Caco-2 (cell line): ENCODE measurements at regions of chr10 and their contacts with region 1.

Region 1: DNA sequence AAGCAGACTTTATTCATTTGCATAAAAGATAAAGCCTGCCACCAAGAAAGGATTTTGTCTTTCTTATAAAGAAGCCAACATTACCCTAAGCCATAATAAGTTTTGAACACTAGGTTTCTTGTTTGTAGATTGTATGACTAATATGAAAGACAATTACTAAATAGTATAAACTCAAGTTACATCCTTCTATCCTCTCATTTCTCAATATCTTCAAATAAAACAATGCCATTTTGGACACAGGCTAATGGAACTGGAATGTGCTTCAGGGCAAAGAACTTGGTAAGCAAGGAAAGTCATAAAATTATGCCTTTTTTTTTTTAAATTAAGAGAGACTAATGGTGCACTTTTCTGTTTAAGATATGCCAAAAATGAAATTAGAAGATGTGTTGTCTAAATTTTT is 137.7 kb downstream of the DKK1 start:
- DNase-seq: no peak
- H3K4me3 ChIP-seq: no peak overlapping the region
- H3K4me3 Mint-ChIP-seq: no peak overlapping the region
- H3K27ac Mint-ChIP-seq: no peak overlapping the region
- H3K4me1 ChIP-seq: peaks cover 48% of the 10 kb centered on the region
- H3K4me1 Mint-ChIP-seq: peaks cover 25% of the 10 kb centered on the region
- H3K27me3 ChIP-seq: no peaks in the 10 kb centered on the region
- H3K27me3 Mint-ChIP-seq: no peaks in the 10 kb centered on the region
- CTCF ChIP-seq: peak in 1 of 2 experiments; percentile 2

Region 2: GRCh38 chr10:52040486-52040885 is 411.3 kb before region 1 on chr10:
- CTCF ChIA-PET with region 1: no interaction called
- POLR2A ChIA-PET with region 1: no interaction called
- intact Hi-C with region 1: loop called (anchors 5 kb)
- DNase-seq: no peak
- H3K4me3 ChIP-seq: no peak overlapping the region
- H3K4me3 Mint-ChIP-seq: no peak overlapping the region
- H3K27ac Mint-ChIP-seq: no peak overlapping the region
- H3K4me1 ChIP-seq: peaks cover 32% of the 10 kb centered on the region
- H3K4me1 Mint-ChIP-seq: peaks cover 32% of the 10 kb centered on the region
- H3K27me3 ChIP-seq: no peaks in the 10 kb centered on the region
- H3K27me3 Mint-ChIP-seq: no peaks in the 10 kb centered on the region
- CTCF ChIP-seq: no peak

Region 3: GRCh38 chr10:52232561-52233350 is 219.1 kb before region 1 on chr10:
- CTCF ChIA-PET with region 1: no interaction called
- POLR2A ChIA-PET with region 1: no interaction called
- intact Hi-C with region 1: no loop called
- DNase-seq: no peak
- H3K4me3 ChIP-seq: peak overlapping the region; percentile 15
- H3K4me3 Mint-ChIP-seq: peak overlapping the region; percentile 75
- H3K27ac Mint-ChIP-seq: peak overlapping the region; percentile 69
- H3K4me1 ChIP-seq: peaks cover 9% of the 10 kb centered on the region; the same call in 1 of the 2 replicates
- H3K4me1 Mint-ChIP-seq: peaks cover 11% of the 10 kb centered on the region
- H3K27me3 ChIP-seq: no peaks in the 10 kb centered on the region
- H3K27me3 Mint-ChIP-seq: no peaks in the 10 kb centered on the region
- CTCF ChIP-seq: no peak

Region 4: DNA sequence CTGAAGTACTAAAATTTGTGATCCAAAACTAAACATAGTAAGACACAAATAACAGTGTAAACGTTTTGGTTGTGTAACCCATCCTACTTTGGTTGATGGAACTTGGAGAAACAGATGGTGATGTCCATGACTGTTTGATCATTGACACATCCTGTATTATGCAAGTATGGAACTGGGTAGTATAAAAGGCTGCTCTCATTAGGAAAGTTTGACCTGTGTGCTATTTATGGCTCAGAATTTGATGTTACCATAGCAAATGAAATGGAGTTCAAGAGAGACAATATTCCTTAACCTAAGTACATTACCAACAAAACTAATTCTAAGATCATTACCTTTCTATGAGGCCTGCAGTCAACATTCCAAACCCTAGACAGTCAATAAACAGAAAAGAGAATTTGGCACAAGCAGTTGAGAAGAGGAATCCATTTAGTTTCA is 97.8 kb before region 1 on chr10:
- CTCF ChIA-PET with region 1: no interaction called
- POLR2A ChIA-PET with region 1: no interaction called
- intact Hi-C with region 1: loop called (anchors 1 kb)
- DNase-seq: peak in 1 of 2 experiments; percentile 80
- H3K4me3 ChIP-seq: no peak overlapping the region
- H3K4me3 Mint-ChIP-seq: no peak overlapping the region
- H3K27ac Mint-ChIP-seq: peak overlapping the region; percentile 86
- H3K4me1 ChIP-seq: peaks cover 61% of the 10 kb centered on the region
- H3K4me1 Mint-ChIP-seq: peaks cover 66% of the 10 kb centered on the region
- H3K27me3 ChIP-seq: no peaks in the 10 kb centered on the region
- H3K27me3 Mint-ChIP-seq: no peaks in the 10 kb centered on the region
- CTCF ChIP-seq: no peak

Region 5: DNA sequence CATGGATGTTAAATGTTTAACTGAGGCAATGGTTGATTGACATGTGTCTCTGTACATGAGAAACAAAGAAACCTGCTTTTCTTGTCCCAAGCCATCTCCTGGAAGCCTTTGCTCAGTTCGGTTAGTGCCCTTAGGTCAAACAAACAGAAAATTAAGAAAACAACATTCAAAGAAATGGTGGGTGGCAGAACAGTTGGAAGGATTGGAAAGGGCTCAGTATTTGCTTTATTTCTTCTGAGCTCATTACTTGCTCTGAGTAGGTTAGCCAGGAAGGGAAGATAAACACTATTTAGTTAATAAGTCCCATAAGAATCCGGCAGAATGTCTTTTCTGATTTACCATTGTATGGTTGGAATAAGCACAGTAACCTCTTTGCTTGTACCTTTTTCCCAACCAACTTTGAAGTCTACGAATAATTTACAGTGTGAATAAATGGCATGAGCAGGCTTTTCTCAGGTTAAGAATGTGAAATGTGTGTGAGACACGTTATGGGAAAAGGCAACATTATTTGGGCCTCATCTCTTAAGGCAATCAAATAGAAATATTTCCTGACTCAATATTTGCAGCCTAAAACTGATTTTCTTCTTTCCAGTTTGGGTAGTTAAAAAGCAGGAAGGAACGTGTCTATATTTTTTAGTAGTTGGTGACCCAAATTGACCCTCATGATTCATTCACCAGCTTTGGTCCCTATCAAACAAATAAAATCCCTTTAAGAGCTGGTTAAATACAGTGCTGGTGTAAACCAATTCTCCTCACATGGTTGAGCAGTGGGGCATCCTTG is 20.7 kb after region 1 on chr10:
- CTCF ChIA-PET with region 1: interaction called, 3 read pairs
- POLR2A ChIA-PET with region 1: no interaction called
- intact Hi-C with region 1: loop called (anchors 1 kb)
- DNase-seq: peak in 1 of 2 experiments; percentile 41
- H3K4me3 ChIP-seq: no peak overlapping the region
- H3K4me3 Mint-ChIP-seq: peak overlapping the region; percentile 5
- H3K27ac Mint-ChIP-seq: peak overlapping the region; percentile 26
- H3K4me1 ChIP-seq: peaks cover 19% of the 10 kb centered on the region
- H3K4me1 Mint-ChIP-seq: peaks cover 42% of the 10 kb centered on the region
- H3K27me3 ChIP-seq: no peaks in the 10 kb centered on the region
- H3K27me3 Mint-ChIP-seq: no peaks in the 10 kb centered on the region
- CTCF ChIP-seq: no peak

Region 6: DNA sequence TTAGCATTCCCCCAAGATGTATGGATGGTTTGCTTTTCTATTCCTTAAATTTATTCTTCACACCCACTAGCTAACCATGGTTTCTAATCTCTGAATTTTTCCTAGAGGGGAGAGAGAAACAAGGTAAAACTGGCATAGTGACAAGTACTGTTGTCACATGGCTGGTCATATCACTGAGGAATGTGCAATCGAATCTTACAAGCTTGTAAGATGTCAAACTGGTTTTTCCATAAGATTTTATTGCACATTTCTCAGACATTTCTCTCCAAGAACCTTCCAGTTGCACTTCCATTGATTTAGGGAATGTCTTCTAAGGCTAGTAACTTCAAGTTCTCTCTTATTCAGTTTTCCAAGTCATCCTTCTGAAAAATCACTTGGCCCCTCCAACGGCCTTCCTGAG is 231.0 kb after region 1 on chr10:
- CTCF ChIA-PET with region 1: no interaction called
- POLR2A ChIA-PET with region 1: no interaction called
- intact Hi-C with region 1: loop called (anchors 5 kb)
- DNase-seq: peak; percentile 52 to 76
- H3K4me3 ChIP-seq: no peak overlapping the region
- H3K4me3 Mint-ChIP-seq: peak overlapping the region; percentile 6
- H3K27ac Mint-ChIP-seq: no peak overlapping the region
- H3K4me1 ChIP-seq: peaks cover 43% of the 10 kb centered on the region
- H3K4me1 Mint-ChIP-seq: peaks cover 29% of the 10 kb centered on the region
- H3K27me3 ChIP-seq: no peaks in the 10 kb centered on the region
- H3K27me3 Mint-ChIP-seq: no peaks in the 10 kb centered on the region
- CTCF ChIP-seq: no peak